ENCODE measurements at regions of chr11 and their contacts with region 1.

Region 1: DNA sequence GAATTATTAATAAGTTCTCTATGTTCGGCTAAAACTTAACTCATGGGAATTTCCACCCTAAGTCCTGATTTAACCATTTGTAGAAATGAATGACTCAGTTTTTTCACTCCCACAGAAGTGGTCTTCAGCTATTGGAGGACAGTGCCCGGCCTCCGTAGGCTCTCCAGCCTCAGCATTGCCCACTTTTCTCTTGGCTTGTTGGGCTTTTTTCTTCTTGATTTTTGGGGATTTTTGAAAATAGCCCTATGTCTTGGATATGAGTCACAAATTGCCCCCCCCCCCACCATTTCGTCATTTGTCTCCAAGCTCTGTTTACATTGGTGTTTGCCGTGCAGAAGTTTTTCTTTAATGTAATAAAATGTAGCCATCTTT is 66.7 kb downstream of the PACS1 start:
- DNase-seq: peak; percentile 55
- H3K4me3 Mint-ChIP-seq: no peak overlapping the region
- H3K27ac Mint-ChIP-seq: no peak overlapping the region
- H3K4me1 Mint-ChIP-seq: peaks cover 22% of the 10 kb centered on the region
- H3K27me3 Mint-ChIP-seq: no peaks in the 10 kb centered on the region
- CTCF ChIP-seq: no peak

Region 2: DNA sequence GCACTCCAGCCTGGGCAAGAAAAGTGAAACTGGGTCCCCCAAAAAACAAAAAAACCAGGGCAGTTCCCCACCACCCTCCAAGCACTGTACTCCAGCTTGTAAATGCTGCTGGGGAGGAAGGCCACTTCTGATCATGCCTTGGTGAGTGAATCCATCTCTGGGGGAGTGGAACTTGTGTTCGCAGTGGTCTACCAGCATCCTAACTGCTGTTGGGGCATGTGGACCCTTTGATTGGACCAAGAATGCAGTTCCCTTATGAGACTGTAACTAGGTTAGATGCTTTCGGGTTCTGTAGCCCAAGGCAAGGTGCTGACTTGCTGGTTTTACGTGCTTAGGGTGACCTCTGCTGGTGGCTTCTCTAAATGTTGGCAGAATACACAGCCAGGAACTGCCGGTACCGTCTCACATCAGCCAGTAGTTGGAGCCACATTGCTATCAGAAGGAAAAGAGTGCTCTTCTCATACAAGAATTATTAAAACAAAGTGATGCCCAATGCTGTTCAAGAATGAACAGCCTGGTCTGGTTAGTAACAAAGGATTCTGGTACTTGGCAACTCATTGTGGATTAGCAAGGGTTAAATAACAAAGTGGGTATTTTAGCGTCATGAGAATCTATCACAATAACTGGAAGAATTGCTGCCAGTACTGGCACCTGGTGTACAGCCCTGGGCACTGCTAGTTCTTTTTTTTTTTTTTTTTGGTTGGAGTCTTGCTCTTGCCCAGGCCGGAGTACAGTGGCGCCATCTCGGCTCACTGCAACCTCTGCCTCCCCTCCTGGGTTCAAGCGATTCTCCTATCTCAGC is 147.7 kb before region 1 on chr11:
- CTCF ChIA-PET with region 1: interaction called, 4 read pairs
- POLR2A ChIA-PET with region 1: no interaction called
- intact Hi-C with region 1: loop called (anchors 1 kb)
- DNase-seq: peak; percentile 96
- H3K4me3 Mint-ChIP-seq: no peak overlapping the region
- H3K27ac Mint-ChIP-seq: no peak overlapping the region
- H3K4me1 Mint-ChIP-seq: peaks cover 5% of the 10 kb centered on the region
- H3K27me3 Mint-ChIP-seq: no peaks in the 10 kb centered on the region
- CTCF ChIP-seq: peak; percentile 93

Region 3: DNA sequence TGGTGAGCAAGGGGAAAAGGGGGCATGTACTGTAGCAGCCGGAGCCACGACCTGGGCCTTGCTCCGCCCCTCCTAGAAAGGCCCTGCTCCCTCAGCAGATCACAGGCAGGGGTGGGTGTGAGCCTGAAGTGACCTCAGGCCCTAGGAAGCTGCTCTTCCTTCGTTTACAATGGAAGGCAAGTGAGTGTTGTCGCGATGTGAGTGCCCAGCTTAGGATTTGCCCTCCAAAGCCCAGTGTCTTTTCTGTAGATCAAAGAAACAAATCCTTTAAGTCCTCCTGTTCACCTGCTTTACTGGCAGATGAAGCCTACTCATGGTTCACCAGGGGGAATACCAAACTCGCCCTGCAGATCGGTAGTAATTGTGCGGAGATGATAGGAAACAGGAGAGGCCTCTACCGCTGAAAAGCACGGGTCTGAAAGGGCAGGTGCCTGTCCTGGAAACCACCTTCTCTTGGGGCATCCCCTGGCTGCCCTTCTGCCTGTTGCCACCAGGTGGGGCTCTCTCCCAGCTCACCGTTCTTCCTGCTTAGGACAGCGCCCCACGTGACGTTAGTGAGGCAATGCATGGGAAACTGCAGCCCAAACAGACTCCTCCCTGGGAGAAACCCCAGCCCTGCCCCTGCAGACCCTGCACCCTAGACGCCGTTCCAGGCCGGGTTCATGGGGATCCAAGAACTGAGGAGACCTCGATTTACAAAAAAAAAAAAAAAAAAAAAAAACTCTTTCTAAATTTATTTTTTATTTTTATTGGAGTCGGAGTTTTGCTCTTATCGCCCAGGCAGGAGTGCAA is 85.8 kb after region 1 on chr11:
- CTCF ChIA-PET with region 1: no interaction called
- POLR2A ChIA-PET with region 1: no interaction called
- intact Hi-C with region 1: no loop called
- DNase-seq: peak; percentile 92
- H3K4me3 Mint-ChIP-seq: no peak overlapping the region
- H3K27ac Mint-ChIP-seq: no peak overlapping the region
- H3K4me1 Mint-ChIP-seq: peaks cover 6% of the 10 kb centered on the region
- H3K27me3 Mint-ChIP-seq: no peaks in the 10 kb centered on the region
- CTCF ChIP-seq: peak; percentile 98

Measured in MCF 10A (cell line).